ENCODE measurements at regions of chr5 and their contacts with region 1.

Region 1: DNA sequence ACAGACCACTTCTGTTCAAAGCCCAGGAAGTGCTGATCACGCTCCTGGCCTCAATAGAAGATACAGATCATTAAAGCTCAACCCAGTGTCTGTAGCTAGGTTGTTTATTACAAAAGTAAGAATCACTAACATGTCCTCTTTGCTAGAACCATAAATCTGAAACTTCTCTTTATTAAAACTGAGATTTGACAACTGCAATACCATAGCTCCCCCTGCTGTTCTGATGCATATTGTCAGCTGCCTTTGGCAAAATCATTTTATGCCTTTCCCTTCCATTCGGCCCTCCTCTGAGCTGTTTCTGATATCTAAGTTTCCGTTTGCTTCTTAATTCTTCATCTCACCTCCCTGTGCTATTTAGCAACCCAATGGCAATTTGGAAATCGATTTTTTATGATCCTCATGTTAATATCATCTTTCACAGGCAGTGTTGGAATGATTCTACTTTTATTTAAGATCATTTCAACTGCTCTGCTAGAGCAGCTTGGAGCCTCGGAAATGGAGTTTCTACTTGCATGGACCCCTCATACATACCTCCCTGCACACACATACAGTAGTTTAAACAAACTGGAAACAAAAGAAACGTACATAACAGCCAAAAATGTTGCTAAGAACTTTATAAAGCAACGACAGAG is 998.8 kb downstream of the MAT2B start:
- DNase-seq: peak in 33 of 42 donors; percentile 5 to 82 (median 59)

Region 2: GRCh38 chr5:163564321-163564938 is 939.8 kb before region 1 on chr5:
- intact Hi-C with region 1: loop called (anchors 10 kb)
- DNase-seq: peak; percentile 14 to 89 (median 72)

Region 3: DNA sequence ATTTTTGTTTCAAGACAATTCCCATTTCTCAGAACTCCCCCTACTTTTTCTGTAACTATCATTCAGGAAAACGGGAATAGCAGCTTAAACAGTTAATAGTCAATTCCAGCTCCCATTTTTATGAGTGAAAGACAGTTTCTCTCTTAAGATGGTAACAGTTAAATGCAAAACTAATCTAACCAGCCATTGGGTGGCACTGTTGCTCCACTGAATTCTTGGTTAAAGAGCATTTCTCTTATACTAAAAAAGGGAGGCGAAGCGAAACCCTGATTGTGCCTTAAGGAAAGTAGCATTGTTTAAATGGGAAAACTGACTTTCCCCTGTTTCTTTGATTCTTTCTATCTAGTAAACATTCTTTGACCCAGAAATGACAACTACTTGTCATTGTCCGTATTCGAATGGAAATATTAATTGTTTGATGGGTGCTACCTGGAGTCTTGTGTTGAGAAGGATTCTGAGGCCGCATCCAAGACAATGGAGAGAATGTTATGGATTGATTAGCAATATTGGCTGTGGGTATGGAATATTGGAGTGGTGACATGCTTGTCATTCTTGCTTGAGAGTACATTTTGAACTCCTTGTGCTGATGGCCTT is 491.1 kb before region 1 on chr5:
- intact Hi-C with region 1: loop called (anchors 10 kb)
- DNase-seq: peak in 35 of 42 donors; percentile 8 to 86 (median 57)

Region 4: GRCh38 chr5:164561933-164562872 is 57.9 kb after region 1 on chr5:
- intact Hi-C with region 1: no loop called
- DNase-seq: peak in 13 of 42 donors; percentile 3 to 50 (median 15)